ENCODE measurements at regions of chr16 and their contacts with region 1.

Region 1: GRCh38 chr16:70737377-70738082 is 51.7 kb upstream of the MTSS2 start:
- DNase-seq: no peak
- H3K4me3 ChIP-seq: no peak overlapping the region
- H3K27ac ChIP-seq: no peak overlapping the region
- H3K4me1 ChIP-seq: peaks cover 0 to 12% (median 6%) of the 10 kb centered on the region in 4 experiments; a peak in 6 of 7 replicates
- H3K27me3 ChIP-seq: no peaks in the 10 kb centered on the region
- CTCF ChIP-seq: no peak
- EP300 ChIP-seq: no peak
- POLR2A ChIP-seq: no peak
- RAD21 ChIP-seq: no peak

Region 2: GRCh38 chr16:70418274-70418992 is 319.1 kb before region 1 on chr16:
- CTCF ChIA-PET with region 1: no interaction called
- POLR2A ChIA-PET with region 1: no interaction called
- DNase-seq: no peak
- H3K4me3 ChIP-seq: no peak overlapping the region
- H3K27ac ChIP-seq: no peak overlapping the region; the same call in 1 of the 2 replicates
- H3K4me1 ChIP-seq: peaks cover 0 to 30% (median 20%) of the 10 kb centered on the region in 4 experiments; a peak in 6 of 7 replicates
- H3K27me3 ChIP-seq: no peaks in the 10 kb centered on the region
- CTCF ChIP-seq: no peak
- EP300 ChIP-seq: no peak
- POLR2A ChIP-seq: no peak
- RAD21 ChIP-seq: no peak

Region 3: GRCh38 chr16:70540994-70541393 is 196.5 kb before region 1 on chr16:
- CTCF ChIA-PET with region 1: no interaction called
- POLR2A ChIA-PET with region 1: no interaction called
- DNase-seq: no peak
- H3K4me3 ChIP-seq: no peak overlapping the region
- H3K27ac ChIP-seq: no peak overlapping the region
- H3K4me1 ChIP-seq: no peaks in the 10 kb centered on the region
- H3K27me3 ChIP-seq: no peaks in the 10 kb centered on the region
- CTCF ChIP-seq: no peak
- EP300 ChIP-seq: no peak
- POLR2A ChIP-seq: no peak
- RAD21 ChIP-seq: no peak

Region 4: DNA sequence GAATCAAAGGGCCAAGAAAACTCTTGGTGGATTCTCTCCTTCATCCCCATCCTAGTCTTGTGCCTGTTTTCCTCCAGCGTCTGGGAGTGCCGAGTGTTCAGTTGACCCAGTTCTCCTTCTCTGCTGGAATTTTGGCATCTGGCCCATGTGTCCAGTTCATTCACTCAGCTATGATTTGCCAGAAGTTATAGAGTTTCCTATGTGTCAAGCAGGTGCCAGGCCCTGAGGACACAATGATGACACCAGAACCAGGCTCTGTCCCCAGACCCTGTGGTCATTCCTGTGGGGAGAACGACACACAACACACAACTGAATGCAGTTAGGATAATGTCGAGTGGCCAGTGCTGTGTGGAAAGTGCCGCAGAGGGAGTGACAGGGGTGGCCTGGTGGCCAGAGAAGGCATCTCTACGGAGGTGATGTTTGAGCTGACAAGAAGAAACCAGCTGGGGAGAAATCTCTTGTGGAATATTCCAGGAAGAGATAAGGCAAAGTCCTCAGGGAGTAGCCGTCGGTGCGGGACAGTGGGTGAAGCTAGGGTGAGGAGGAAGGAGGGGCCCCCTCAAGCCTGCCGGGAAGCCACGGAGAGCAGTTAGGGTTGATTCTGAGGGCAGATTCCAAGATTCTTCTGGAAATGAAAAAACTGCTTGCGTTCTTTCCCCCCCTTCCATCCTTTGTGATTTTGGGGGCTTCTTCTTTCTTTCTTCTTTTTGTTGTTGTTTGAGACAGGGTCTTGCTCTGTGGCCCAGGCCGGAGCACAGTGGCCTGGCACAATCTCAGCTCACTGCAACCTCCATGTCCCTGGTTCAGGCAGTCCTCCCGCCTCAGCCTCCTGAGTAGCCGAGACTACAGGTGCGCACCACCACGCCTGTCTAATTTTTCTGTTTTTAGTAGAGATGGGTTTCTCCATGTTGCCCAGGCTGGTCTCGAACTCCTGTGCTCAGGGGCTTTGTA is 127.0 kb before region 1 on chr16:
- CTCF ChIA-PET with region 1: no interaction called
- POLR2A ChIA-PET with region 1: no interaction called
- DNase-seq: no peak
- H3K4me3 ChIP-seq: no peak overlapping the region
- H3K27ac ChIP-seq: no peak overlapping the region
- H3K4me1 ChIP-seq: peaks cover 0 to 3% (median 0%) of the 10 kb centered on the region in 4 experiments; a peak in 2 of 7 replicates
- H3K27me3 ChIP-seq: no peaks in the 10 kb centered on the region
- CTCF ChIP-seq: no peak
- EP300 ChIP-seq: no peak
- POLR2A ChIP-seq: no peak
- RAD21 ChIP-seq: no peak

Region 5: DNA sequence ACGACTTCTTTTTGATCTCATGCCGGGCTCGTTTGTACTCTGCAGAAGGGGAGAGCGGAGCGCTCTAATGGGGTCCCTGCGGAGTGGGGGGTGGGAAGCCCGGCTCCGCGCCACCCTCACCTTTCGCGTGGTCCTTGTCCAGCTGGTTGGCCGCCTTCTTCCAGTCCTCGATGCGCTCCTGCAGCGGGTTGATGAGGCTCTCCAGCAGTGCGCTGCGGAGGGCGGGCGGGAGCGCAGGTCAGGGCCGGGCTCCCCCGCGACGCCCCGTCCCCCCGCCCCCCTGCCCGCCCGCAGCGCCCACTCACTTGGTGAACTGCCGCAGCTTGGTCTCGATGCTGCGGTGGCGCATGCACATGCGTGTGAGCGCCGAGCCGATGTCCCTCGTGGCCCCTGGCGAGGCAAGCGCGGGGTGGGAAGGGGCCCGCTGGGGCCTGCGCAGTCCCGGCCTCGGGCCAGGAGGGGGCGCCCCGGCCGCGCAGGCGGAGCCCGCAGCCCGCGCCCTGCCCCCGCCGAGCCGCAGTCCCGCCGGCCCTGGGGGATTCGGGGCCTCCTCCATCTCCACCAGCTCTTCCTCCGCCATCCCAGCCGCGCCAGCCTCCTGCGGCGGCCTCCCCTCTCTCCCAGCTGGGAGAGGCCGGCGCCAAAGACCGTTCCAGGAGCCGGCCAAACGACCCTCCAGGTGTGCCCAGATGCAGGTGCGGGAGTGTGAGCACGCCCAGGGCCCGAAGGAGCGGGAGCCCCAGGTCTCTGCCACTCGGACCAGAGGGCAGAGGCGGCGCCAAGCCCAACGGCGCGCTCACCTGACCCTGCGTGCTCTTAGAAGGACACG is 57.6 kb before region 1 on chr16:
- CTCF ChIA-PET with region 1: interaction called, 148 read pairs
- POLR2A ChIA-PET with region 1: interaction called, 8 read pairs
- DNase-seq: peak in 1 of 2 experiments; percentile 84
- H3K4me3 ChIP-seq: peak overlapping the region in 1 of 4 experiments; percentile 47; a peak in 2 of 8 replicates
- H3K27ac ChIP-seq: no peak overlapping the region
- H3K4me1 ChIP-seq: peaks cover 0 to 14% (median 4%) of the 10 kb centered on the region in 4 experiments; a peak in 5 of 7 replicates
- H3K27me3 ChIP-seq: peaks cover 0 to 5% (median 3%) of the 10 kb centered on the region in 4 experiments; a peak in 4 of 7 replicates
- CTCF ChIP-seq: peak in 2 of 3 experiments; percentile 73 to 86; a peak in 3 of 4 replicates
- EP300 ChIP-seq: no peak
- POLR2A ChIP-seq: no peak
- RAD21 ChIP-seq: peak; percentile 47 to 82

Region 6: DNA sequence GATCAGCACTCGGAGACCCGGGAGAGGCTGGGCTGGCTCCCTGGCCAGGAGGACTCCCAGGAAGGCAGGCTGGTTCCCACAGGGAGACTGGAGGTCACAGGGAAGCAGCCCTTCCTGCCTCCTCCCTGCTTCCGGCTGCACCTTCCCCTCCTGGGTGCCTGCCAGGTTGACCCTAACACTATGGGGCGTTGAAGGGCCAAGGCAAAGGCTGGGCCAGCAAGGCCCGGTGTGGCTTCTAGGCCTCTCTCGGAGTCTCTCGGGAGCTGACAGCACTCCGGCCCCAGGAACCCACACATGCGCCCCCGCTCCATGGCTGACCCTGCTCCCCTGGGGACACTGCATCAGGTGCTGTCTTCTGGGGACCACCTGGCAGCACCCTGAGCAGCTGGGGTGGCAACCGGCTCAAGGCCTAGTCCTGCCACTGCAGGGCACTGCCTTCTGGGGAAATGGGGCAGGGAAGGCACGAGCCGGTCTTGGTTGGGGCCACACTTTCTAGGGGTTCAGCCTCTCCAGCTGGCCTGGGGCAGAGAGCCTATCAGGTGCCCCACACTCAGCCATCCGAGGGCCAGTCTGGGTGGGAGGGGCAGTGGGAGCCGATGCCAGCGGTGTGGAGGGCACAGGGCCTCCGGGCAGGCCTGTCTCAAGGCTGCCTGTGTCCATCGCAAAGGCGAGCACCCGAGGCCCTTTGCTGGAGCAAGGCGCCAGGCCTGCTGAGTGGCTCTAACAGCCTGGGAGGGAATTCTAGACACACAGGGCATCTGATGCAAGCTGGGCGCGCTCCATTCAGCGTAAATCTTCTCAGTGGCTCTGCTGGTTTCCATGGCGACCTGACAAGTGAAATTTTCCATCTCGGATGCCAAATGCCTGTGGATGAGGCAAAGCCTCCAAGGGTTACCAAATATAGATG is 46.1 kb before region 1 on chr16:
- CTCF ChIA-PET with region 1: interaction called, 49 read pairs
- POLR2A ChIA-PET with region 1: interaction called, 12 read pairs
- DNase-seq: no peak
- H3K4me3 ChIP-seq: no peak overlapping the region
- H3K27ac ChIP-seq: no peak overlapping the region
- H3K4me1 ChIP-seq: peaks cover 5 to 43% (median 30%) of the 10 kb centered on the region in 4 experiments
- H3K27me3 ChIP-seq: no peaks in the 10 kb centered on the region; a peak in 1 of 7 replicates
- CTCF ChIP-seq: no peak
- EP300 ChIP-seq: no peak
- POLR2A ChIP-seq: no peak
- RAD21 ChIP-seq: no peak

Region 7: GRCh38 chr16:70715055-70715858 is 22.3 kb before region 1 on chr16:
- CTCF ChIA-PET with region 1: interaction called, 13 read pairs
- POLR2A ChIA-PET with region 1: interaction called, 4 read pairs
- DNase-seq: no peak
- H3K4me3 ChIP-seq: no peak overlapping the region
- H3K27ac ChIP-seq: no peak overlapping the region
- H3K4me1 ChIP-seq: peaks cover 4 to 34% (median 22%) of the 10 kb centered on the region in 4 experiments
- H3K27me3 ChIP-seq: no peaks in the 10 kb centered on the region
- CTCF ChIP-seq: no peak
- EP300 ChIP-seq: no peak
- POLR2A ChIP-seq: no peak
- RAD21 ChIP-seq: no peak

Region 8: GRCh38 chr16:70750893-70751475 is 13.5 kb after region 1 on chr16:
- CTCF ChIA-PET with region 1: interaction called, 46 read pairs
- POLR2A ChIA-PET with region 1: no interaction called
- DNase-seq: no peak
- H3K4me3 ChIP-seq: no peak overlapping the region
- H3K27ac ChIP-seq: no peak overlapping the region
- H3K4me1 ChIP-seq: peaks cover 0 to 10% (median 6%) of the 10 kb centered on the region in 4 experiments; a peak in 5 of 7 replicates
- H3K27me3 ChIP-seq: no peaks in the 10 kb centered on the region
- CTCF ChIP-seq: no peak
- EP300 ChIP-seq: no peak
- POLR2A ChIP-seq: no peak
- RAD21 ChIP-seq: no peak

Measured in H1 (cell line).